ENCODE measurements at regions of chr5 and their contacts with region 1.

Region 1: DNA sequence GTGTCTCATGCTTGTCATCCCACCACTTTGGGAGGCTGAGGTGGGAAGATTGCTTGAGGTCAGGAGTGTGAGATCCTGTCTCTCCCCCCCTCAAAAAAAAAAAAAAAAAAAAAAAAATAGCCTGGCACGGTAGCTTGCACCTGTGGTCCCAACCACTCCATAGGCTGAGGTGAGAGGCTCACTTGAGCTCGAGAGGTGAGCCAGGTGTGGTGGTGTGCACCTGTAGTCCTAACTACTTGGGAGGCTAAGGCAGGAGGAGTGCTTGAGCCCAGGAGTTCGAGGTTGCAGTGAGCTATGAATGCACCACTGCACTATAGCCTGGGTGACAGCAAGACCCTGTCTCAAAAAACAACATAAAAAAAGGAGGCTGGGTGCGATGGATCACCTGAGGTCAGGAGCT is 9.7 kb upstream of the ETF1 start:
- DNase-seq: no peak
- H3K4me3 ChIP-seq: no peak overlapping the region
- H3K27me3 ChIP-seq: no peaks in the 10 kb centered on the region
- CTCF ChIP-seq: no peak

Region 2: DNA sequence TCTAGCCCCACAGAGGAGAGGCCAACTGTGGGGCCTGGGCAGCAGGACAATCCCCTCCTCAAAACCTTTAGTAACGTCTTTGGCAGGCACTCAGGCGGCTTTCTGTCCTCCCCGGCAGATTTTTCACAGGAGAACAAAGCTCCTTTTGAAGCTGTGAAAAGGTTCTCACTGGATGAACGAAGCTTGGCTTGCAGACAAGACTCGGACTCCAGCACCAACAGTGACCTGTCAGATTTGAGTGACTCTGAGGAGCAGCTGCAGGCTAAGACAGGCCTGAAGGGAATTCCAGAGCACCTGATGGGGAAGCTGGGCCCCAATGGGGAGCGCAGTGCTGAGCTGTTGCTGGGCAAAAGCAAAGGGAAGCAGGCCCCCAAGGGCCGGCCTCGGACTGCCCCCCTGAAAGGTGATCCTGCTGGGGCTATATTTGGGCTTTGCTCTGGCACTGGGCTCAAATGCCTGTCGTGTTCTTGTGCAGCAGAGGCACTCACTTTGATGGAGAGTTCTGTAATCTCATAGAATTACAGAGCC is 160.8 kb before region 1 on chr5:
- CTCF ChIA-PET with region 1: no interaction called
- POLR2A ChIA-PET with region 1: no interaction called
- DNase-seq: no peak
- H3K4me3 ChIP-seq: no peak overlapping the region
- H3K27me3 ChIP-seq: no peaks in the 10 kb centered on the region
- CTCF ChIP-seq: no peak

Region 3: GRCh38 chr5:138565100-138565821 is 12.6 kb after region 1 on chr5:
- CTCF ChIA-PET with region 1: interaction called, 12 read pairs
- POLR2A ChIA-PET with region 1: no interaction called
- DNase-seq: no peak
- H3K4me3 ChIP-seq: no peak overlapping the region
- H3K27me3 ChIP-seq: no peaks in the 10 kb centered on the region
- CTCF ChIP-seq: no peak

Region 4: DNA sequence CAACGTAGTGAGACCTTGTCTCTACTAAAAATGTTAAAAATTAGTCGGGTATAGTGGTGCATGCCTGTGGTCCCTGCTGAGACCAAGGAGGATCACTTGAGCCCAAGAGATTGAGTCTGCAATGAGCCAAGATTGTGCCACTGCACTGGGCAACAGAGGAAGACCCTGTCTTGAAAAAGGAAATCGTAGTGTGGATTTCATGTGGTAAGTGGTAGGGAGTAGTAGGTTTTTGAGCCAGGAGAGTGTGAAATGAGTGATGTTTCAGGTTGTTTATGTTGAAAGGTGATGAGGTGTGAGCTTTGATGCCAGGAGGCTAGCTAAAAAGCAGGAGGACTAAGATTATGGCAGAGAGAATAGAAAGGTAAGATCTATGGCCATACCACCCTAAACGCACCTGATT is 746.8 kb after region 1 on chr5:
- CTCF ChIA-PET with region 1: no interaction called
- POLR2A ChIA-PET with region 1: interaction called, 12 read pairs
- DNase-seq: no peak
- H3K4me3 ChIP-seq: no peak overlapping the region
- H3K27me3 ChIP-seq: no peaks in the 10 kb centered on the region
- CTCF ChIP-seq: no peak

Measured in BJ (cell line).